Activated T-helper 1 cell treated with anti-CD3 and anti-CD28 coated beads, Interleukin-12 subunit alpha, Interleukin-12 subunit beta, Interleukin-2, Interleukin-4 antibody, amounts not matched to agents 30 ng/mL and 10 ng/mL and 1 ng/mL, durations not matched to agents 14 hours and 24 hours and 36 hours (primary cell): ENCODE measurements at regions of chr12 and their contacts with region 1.

Region 1: GRCh38 chr12:59149997-59150642 is 229.8 kb upstream of the LRIG3 start:
- DNase-seq: peak; percentile 2
- H3K4me3 Mint-ChIP-seq: no peak overlapping the region
- H3K27ac Mint-ChIP-seq: no peak overlapping the region
- H3K4me1 Mint-ChIP-seq: no peaks in the 10 kb centered on the region
- H3K27me3 Mint-ChIP-seq: no peaks in the 10 kb centered on the region

Region 2: GRCh38 chr12:58540480-58541299 is 609.4 kb before region 1 on chr12:
- intact Hi-C with region 1: loop called (anchors 1 kb)
- DNase-seq: peak; percentile 1
- H3K4me3 Mint-ChIP-seq: no peak overlapping the region
- H3K27ac Mint-ChIP-seq: no peak overlapping the region
- H3K4me1 Mint-ChIP-seq: no peaks in the 10 kb centered on the region
- H3K27me3 Mint-ChIP-seq: no peaks in the 10 kb centered on the region

Region 3: DNA sequence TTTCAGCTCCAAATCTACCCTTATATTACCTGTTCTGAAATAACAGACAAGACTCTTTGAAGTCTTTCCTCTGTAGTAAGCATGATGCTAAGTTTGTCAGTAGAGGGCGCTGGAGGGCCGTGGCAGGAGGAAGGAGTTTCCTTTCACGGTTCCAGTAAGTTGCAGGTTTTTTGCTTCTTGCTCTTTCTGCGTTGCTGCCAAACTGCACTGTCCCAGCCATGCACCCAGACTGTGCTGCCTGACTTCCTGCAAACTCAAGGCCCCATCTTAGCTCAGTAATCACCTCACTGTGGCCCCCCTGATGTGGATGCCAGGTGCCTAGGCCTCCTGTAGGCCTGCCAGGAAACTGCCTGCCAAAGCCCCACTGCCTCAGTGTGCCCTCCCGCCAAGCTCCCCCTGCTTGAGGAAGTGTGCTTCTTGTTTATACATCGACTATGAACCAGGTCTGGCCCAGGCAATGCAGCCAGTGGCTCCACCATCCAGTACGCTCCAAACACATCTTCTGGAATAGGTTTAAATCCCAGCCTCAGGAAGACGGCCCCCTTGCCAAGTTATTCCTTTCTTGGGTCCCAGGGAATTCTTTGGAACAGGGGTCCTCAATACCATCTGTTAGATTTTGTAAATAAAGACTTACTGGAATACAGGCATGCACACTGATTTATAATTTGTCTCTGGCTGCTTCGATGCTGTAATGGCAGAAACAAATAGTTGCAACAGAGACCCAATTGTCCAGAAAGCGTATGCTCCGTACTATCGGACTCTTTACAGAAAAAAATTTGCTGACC is 36.1 kb before region 1 on chr12:
- intact Hi-C with region 1: loop called (anchors 1 kb)
- DNase-seq: peak; percentile 41
- H3K4me3 Mint-ChIP-seq: no peak overlapping the region
- H3K27ac Mint-ChIP-seq: no peak overlapping the region
- H3K4me1 Mint-ChIP-seq: no peaks in the 10 kb centered on the region
- H3K27me3 Mint-ChIP-seq: no peaks in the 10 kb centered on the region

Region 4: GRCh38 chr12:59131462-59131861 is 18.7 kb before region 1 on chr12:
- intact Hi-C with region 1: no loop called
- DNase-seq: no peak
- H3K4me3 Mint-ChIP-seq: no peak overlapping the region
- H3K27ac Mint-ChIP-seq: no peak overlapping the region
- H3K4me1 Mint-ChIP-seq: no peaks in the 10 kb centered on the region
- H3K27me3 Mint-ChIP-seq: no peaks in the 10 kb centered on the region